ENCODE measurements at regions of chr19 and their contacts with region 1.

Region 1: GRCh38 chr19:47190167-47190727 is 40.8 kb downstream of the BBC3 start:
- DNase-seq: peak; percentile 34 to 80 (median 64)
- ATAC-seq: peak; percentile 53
- H3K4me3 ChIP-seq: no peak overlapping the region
- H3K4me3 Mint-ChIP-seq: peak overlapping the region; percentile 49
- H3K27ac ChIP-seq: peak overlapping the region; percentile 0 to 36
- H3K27ac Mint-ChIP-seq: peak overlapping the region; percentile 90
- H3K4me1 ChIP-seq: peaks cover 82% of the 10 kb centered on the region
- H3K4me1 Mint-ChIP-seq: peaks cover 58% of the 10 kb centered on the region
- H3K27me3 ChIP-seq: no peaks in the 10 kb centered on the region
- H3K27me3 Mint-ChIP-seq: no peaks in the 10 kb centered on the region
- CTCF ChIP-seq: no peak

Region 2: DNA sequence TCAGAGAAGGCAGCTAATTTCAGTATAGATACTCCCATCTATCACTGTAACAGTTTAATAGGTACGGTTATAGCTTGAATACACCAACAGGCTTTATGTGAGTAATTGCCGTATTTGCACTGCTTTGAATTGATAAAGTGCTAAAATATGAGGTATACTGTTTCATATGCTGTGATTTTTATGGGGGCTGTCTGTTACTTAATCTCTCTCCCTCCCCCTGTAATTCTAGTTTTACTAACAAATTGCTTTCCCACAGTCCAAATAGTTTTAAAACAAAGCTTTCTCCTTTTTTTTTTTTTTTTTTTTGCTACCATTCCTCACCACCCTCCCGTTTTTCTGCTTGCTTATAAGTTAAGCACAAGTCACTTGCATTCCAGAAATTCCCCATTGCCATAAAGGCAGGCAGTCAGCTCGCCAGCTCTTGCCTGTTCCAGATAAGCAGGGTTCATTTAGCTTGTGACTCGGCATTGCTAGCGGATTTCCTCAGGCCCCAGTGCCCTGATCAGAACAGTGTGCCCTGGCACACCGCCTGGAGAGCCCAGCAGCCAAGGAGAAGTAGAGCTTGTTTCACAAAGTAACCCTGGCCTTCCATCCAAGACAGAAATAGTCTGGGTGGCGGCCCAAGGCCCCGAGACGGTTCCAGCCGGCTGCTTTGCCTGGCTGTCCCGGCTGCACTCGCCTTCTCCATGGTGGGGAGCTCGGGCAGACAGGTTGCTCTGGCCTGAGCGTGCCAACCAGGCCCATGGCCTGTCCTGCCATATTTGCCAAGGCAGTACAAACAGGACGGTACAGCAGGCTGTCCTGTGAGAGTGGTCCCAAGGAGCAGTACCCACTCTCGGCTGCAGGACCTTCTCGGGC is 214.1 kb before region 1 on chr19:
- CTCF ChIA-PET with region 1: no interaction called
- POLR2A ChIA-PET with region 1: no interaction called
- intact Hi-C with region 1: no loop called
- DNase-seq: no peak
- ATAC-seq: no peak
- H3K4me3 ChIP-seq: no peak overlapping the region
- H3K4me3 Mint-ChIP-seq: no peak overlapping the region
- H3K27ac ChIP-seq: no peak overlapping the region
- H3K27ac Mint-ChIP-seq: no peak overlapping the region
- H3K4me1 ChIP-seq: peaks cover 33% of the 10 kb centered on the region
- H3K4me1 Mint-ChIP-seq: peaks cover 20% of the 10 kb centered on the region
- H3K27me3 ChIP-seq: no peaks in the 10 kb centered on the region
- H3K27me3 Mint-ChIP-seq: no peaks in the 10 kb centered on the region
- CTCF ChIP-seq: no peak

Region 3: DNA sequence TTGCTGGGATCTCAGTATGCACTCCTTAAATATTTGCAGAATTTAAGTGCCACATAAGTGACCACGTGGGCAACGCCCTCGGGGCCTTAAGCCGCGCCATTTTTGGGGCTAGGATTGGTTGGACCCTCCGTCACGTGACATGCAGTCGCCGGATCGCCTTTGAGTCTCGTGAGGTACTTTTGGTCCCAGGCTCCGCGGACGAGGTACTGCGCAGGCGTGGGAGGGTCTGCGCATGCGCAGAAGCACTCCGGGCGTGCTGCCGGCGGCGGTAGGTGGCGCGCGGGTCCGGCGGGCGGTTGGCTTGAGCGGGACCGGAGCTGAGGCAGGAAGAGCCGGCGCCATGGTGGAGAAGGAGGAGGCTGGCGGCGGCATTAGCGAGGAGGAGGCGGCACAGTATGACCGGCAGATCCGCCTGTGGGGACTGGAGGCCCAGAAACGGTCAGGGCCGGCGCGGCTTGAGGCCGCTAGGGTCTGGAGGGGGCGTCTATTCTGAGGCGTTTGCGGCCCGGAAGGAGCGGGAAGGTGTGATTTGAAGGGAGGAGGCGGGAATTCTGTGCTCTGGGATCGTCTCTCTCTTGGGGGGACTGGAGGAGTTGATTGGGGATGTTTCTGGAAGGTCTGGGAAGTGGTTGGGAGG is 59.5 kb before region 1 on chr19 and contains the start of gene SAE1:
- CTCF ChIA-PET with region 1: interaction called, 12 read pairs
- POLR2A ChIA-PET with region 1: interaction called, 3 read pairs
- intact Hi-C with region 1: no loop called
- DNase-seq: peak; percentile 82 to 98 (median 92)
- ATAC-seq: peak; percentile 91
- H3K4me3 ChIP-seq: peak within 1 kb of the TSS; percentile 95
- H3K4me3 Mint-ChIP-seq: peak within 1 kb of the TSS; percentile 96
- H3K27ac ChIP-seq: peak within 1 kb of the TSS; percentile 68 to 74
- H3K27ac Mint-ChIP-seq: peak within 1 kb of the TSS; percentile 83
- H3K4me1 ChIP-seq: peaks cover 44% of the 10 kb centered on the region
- H3K4me1 Mint-ChIP-seq: peaks cover 52% of the 10 kb centered on the region
- H3K27me3 ChIP-seq: no peaks in the 10 kb centered on the region
- H3K27me3 Mint-ChIP-seq: no peaks in the 10 kb centered on the region
- CTCF ChIP-seq: peak; percentile 73
- total RNA-seq, gene SAE1: 29.6 to 30.9 TPM

Region 4: GRCh38 chr19:47152224-47153017 is 37.8 kb before region 1 on chr19:
- CTCF ChIA-PET with region 1: interaction called, 57 read pairs
- POLR2A ChIA-PET with region 1: interaction called, 126 read pairs
- intact Hi-C with region 1: loop called (anchors 1 to 2 kb)
- DNase-seq: no peak
- ATAC-seq: no peak
- H3K4me3 ChIP-seq: no peak overlapping the region
- H3K4me3 Mint-ChIP-seq: no peak overlapping the region
- H3K27ac ChIP-seq: no peak overlapping the region
- H3K27ac Mint-ChIP-seq: peak overlapping the region; percentile 27
- H3K4me1 ChIP-seq: peaks cover 49% of the 10 kb centered on the region
- H3K4me1 Mint-ChIP-seq: peaks cover 51% of the 10 kb centered on the region
- H3K27me3 ChIP-seq: no peaks in the 10 kb centered on the region
- H3K27me3 Mint-ChIP-seq: no peaks in the 10 kb centered on the region
- CTCF ChIP-seq: no peak

Region 5: GRCh38 chr19:47157431-47158321 is 32.6 kb before region 1 on chr19:
- CTCF ChIA-PET with region 1: interaction called, 57 read pairs
- POLR2A ChIA-PET with region 1: interaction called, 126 read pairs
- intact Hi-C with region 1: loop called (anchors 1 to 2 kb)
- DNase-seq: peak in 12 of 14 experiments; percentile 21 to 84 (median 42)
- ATAC-seq: peak; percentile 15
- H3K4me3 ChIP-seq: peak overlapping the region; percentile 31
- H3K4me3 Mint-ChIP-seq: peak overlapping the region; percentile 81
- H3K27ac ChIP-seq: peak overlapping the region; percentile 42 to 64
- H3K27ac Mint-ChIP-seq: peak overlapping the region; percentile 85
- H3K4me1 ChIP-seq: peaks cover 73% of the 10 kb centered on the region
- H3K4me1 Mint-ChIP-seq: peaks cover 71% of the 10 kb centered on the region
- H3K27me3 ChIP-seq: no peaks in the 10 kb centered on the region
- H3K27me3 Mint-ChIP-seq: no peaks in the 10 kb centered on the region
- CTCF ChIP-seq: no peak

Region 6: GRCh38 chr19:47176627-47177090 is 13.6 kb before region 1 on chr19:
- CTCF ChIA-PET with region 1: interaction called, 18 read pairs
- POLR2A ChIA-PET with region 1: interaction called, 76 read pairs
- intact Hi-C with region 1: loop called in 1 of 2 experiments (anchors 1 kb)
- DNase-seq: peak in 11 of 14 experiments; percentile 22 to 82 (median 43)
- ATAC-seq: peak; percentile 85
- H3K4me3 ChIP-seq: peak overlapping the region; percentile 6
- H3K4me3 Mint-ChIP-seq: peak overlapping the region; percentile 81
- H3K27ac ChIP-seq: peak overlapping the region; percentile 60 to 68
- H3K27ac Mint-ChIP-seq: peak overlapping the region; percentile 98
- H3K4me1 ChIP-seq: peaks cover 56% of the 10 kb centered on the region
- H3K4me1 Mint-ChIP-seq: peaks cover 69% of the 10 kb centered on the region
- H3K27me3 ChIP-seq: no peaks in the 10 kb centered on the region
- H3K27me3 Mint-ChIP-seq: no peaks in the 10 kb centered on the region
- CTCF ChIP-seq: no peak

Region 7: GRCh38 chr19:47231215-47231984 is 41.2 kb after region 1 on chr19:
- CTCF ChIA-PET with region 1: interaction called, 13 read pairs
- POLR2A ChIA-PET with region 1: interaction called, 27 read pairs
- intact Hi-C with region 1: loop called in 1 of 2 experiments (anchors 2 kb)
- DNase-seq: peak; percentile 77 to 96 (median 90)
- ATAC-seq: peak; percentile 56
- H3K4me3 ChIP-seq: peak overlapping the region; percentile 62
- H3K4me3 Mint-ChIP-seq: peak overlapping the region; percentile 85
- H3K27ac ChIP-seq: peak overlapping the region in 1 of 2 donors; percentile 55
- H3K27ac Mint-ChIP-seq: peak overlapping the region; percentile 72
- H3K4me1 ChIP-seq: peaks cover 55% of the 10 kb centered on the region
- H3K4me1 Mint-ChIP-seq: peaks cover 28% of the 10 kb centered on the region
- H3K27me3 ChIP-seq: no peaks in the 10 kb centered on the region
- H3K27me3 Mint-ChIP-seq: no peaks in the 10 kb centered on the region
- CTCF ChIP-seq: no peak

Measured in CD4-positive, alpha-beta T cell (primary cell).